Activated CD8-positive, alpha-beta T cell treated with anti-CD3 and anti-CD28 coated beads, Interleukin-2, amount 10 ng/mL, durations not matched to agents 7 days and 5 days (primary cell): ENCODE measurements at regions of chr13 and their contacts with region 1.

Region 1: DNA sequence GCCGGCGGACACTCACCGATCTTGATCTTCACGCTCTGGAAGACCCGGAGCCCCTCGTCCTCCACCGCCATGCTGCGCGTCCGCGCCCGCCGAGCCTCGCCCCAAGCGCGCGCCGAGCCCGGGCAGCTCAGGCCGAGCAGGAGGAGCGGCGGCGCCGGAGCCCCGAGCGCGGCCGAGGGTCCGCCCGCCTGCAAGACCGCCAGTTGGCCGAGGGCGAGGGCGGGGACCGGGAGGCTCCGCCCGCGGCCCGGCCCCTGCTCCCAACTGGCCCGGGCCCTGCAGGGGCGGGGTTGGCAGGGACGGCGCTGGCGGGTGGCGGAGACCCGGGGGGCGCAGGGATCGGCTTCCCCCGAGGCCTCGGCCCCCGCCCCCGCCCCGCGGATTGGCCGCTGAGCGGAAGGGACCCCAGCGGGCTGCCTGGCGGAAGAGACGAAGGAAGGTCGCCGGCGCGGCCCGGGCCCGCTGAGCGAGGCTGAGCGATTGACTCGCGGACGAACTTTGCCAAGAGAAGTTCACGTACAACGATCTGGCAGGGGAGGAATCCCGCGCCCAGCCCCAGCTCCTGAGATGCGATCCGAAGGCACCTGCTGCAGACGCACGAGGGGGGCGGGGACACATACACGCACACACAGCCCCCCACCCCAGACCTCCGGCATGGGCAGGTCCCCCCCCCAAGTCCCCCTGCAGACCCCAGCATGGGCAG is at the start of gene RASA3:
- DNase-seq: peak; percentile 61
- ATAC-seq: peak; percentile 57
- H3K4me3 Mint-ChIP-seq: peak within 1 kb of the TSS; percentile 96
- H3K27ac Mint-ChIP-seq: peak within 1 kb of the TSS; percentile 91
- H3K4me1 Mint-ChIP-seq: peaks cover 57% of the 10 kb centered on the region
- H3K27me3 Mint-ChIP-seq: peaks cover 20% of the 10 kb centered on the region
- total RNA-seq, gene RASA3: 36.9 to 39.3 TPM

Region 2: GRCh38 chr13:114053026-114053425 is 79.5 kb before region 1 on chr13:
- CTCF ChIA-PET with region 1: no interaction called
- POLR2A ChIA-PET with region 1: no interaction called
- DNase-seq: no peak
- ATAC-seq: no peak
- H3K4me3 Mint-ChIP-seq: no peak overlapping the region
- H3K27ac Mint-ChIP-seq: no peak overlapping the region
- H3K4me1 Mint-ChIP-seq: peaks cover 25% of the 10 kb centered on the region
- H3K27me3 Mint-ChIP-seq: no peaks in the 10 kb centered on the region

Region 3: GRCh38 chr13:114110091-114110829 is 22.3 kb before region 1 on chr13:
- CTCF ChIA-PET with region 1: interaction called, 22 read pairs
- POLR2A ChIA-PET with region 1: interaction called, 29 read pairs
- DNase-seq: peak; percentile 88
- ATAC-seq: peak; percentile 94
- H3K4me3 Mint-ChIP-seq: peak overlapping the region; percentile 76
- H3K27ac Mint-ChIP-seq: peak overlapping the region; percentile 98
- H3K4me1 Mint-ChIP-seq: peaks cover 53% of the 10 kb centered on the region
- H3K27me3 Mint-ChIP-seq: no peaks in the 10 kb centered on the region

Region 4: GRCh38 chr13:114142640-114143490 is 10.3 kb after region 1 on chr13:
- CTCF ChIA-PET with region 1: interaction called, 6 read pairs
- POLR2A ChIA-PET with region 1: interaction called, 19 read pairs
- DNase-seq: peak; percentile 89
- ATAC-seq: peak; percentile 74
- H3K4me3 Mint-ChIP-seq: no peak overlapping the region
- H3K27ac Mint-ChIP-seq: no peak overlapping the region
- H3K4me1 Mint-ChIP-seq: peaks cover 31% of the 10 kb centered on the region
- H3K27me3 Mint-ChIP-seq: peaks cover 19% of the 10 kb centered on the region

Region 5: GRCh38 chr13:114148521-114148855 is 15.9 kb after region 1 on chr13:
- CTCF ChIA-PET with region 1: interaction called, 6 read pairs
- POLR2A ChIA-PET with region 1: interaction called, 10 read pairs
- DNase-seq: peak; percentile 93
- ATAC-seq: peak; percentile 94
- H3K4me3 Mint-ChIP-seq: peak overlapping the region; percentile 58
- H3K27ac Mint-ChIP-seq: peak overlapping the region; percentile 91
- H3K4me1 Mint-ChIP-seq: peaks cover 81% of the 10 kb centered on the region
- H3K27me3 Mint-ChIP-seq: peaks cover 37% of the 10 kb centered on the region